Heart left ventricle (tissue), 16 donors: ENCODE measurements at regions of chr7 and their contacts with region 1.

Region 1: DNA sequence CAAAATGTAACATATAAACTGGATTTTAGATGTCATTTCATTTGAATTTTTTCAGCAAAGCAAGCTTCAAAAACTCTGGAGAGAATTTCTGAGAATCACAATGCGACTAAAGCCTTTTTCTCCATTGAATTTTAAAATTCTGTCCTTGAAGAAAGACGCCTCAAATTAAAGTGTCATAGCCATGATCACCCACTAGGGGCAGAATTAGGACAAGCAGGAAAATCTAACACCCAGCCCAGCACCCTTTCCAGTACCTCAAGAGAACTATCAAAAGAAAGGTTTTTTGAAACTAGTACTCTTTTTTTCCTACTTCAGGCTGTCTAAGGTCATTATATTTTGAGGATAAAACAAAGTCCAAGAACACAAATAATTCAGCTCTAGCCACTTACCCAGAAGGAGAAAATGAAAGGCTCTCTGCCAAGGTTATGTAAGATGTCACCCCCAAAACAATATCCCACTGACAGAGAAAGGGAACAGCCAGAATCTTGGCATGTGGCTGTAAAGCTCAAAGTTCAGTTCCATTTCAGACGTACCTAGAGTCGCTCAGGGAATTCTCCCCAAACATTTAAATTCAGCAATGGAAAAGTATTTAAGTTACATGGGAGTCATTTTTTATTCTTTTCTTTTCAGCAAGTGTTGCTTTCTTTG is 299.4 kb downstream of the SNX13 start:
- DNase-seq: no peak
- ATAC-seq: no peak
- H3K4me3 ChIP-seq: no peak overlapping the region
- H3K27ac ChIP-seq: no peak overlapping the region
- H3K4me1 ChIP-seq: no peaks in the 10 kb centered on the region
- H3K27me3 ChIP-seq: no peaks in the 10 kb centered on the region
- CTCF ChIP-seq: peak; percentile 46 to 78 (median 69)
- POLR2A ChIP-seq: no peak

Region 2: GRCh38 chr7:16926283-16926682 is 714.6 kb before region 1 on chr7:
- intact Hi-C with region 1: loop called in 1 of 10 experiments (anchors 10 kb)
- DNase-seq: peak in 4 of 5 donors; percentile 15 to 42 (median 32)
- ATAC-seq: peak in 3 of 4 donors; percentile 63 to 81 (median 81)
- H3K4me3 ChIP-seq: peak overlapping the region in 1 of 12 donors; percentile 16
- H3K27ac ChIP-seq: no peak overlapping the region
- H3K4me1 ChIP-seq: peaks cover 0 to 16% (median 0%) of the 10 kb centered on the region in 12 donors
- H3K27me3 ChIP-seq: no peaks in the 10 kb centered on the region
- CTCF ChIP-seq: peak; percentile 43 to 79 (median 59)
- POLR2A ChIP-seq: no peak

Region 3: GRCh38 chr7:17234398-17235031 is 406.3 kb before region 1 on chr7:
- intact Hi-C with region 1: no loop called
- DNase-seq: peak in 2 of 5 donors; percentile 23 to 25
- ATAC-seq: peak; percentile 16 to 67 (median 58)
- H3K4me3 ChIP-seq: peak overlapping the region in 2 of 12 donors; percentile 11 to 30
- H3K27ac ChIP-seq: peak overlapping the region in 6 of 12 donors; percentile 16 to 86 (median 38)
- H3K4me1 ChIP-seq: peaks cover 0 to 42% (median 21%) of the 10 kb centered on the region in 12 donors
- H3K27me3 ChIP-seq: no peaks in the 10 kb centered on the region
- CTCF ChIP-seq: peak in 1 of 12 donors; percentile 5
- POLR2A ChIP-seq: no peak